Activated T-helper 1 cell treated with anti-CD3 and anti-CD28 coated beads, Interleukin-12 subunit alpha, Interleukin-12 subunit beta, Interleukin-2, Interleukin-4 antibody, amounts not matched to agents 30 ng/mL and 10 ng/mL and 1 ng/mL, durations not matched to agents 14 hours and 24 hours and 36 hours (primary cell): ENCODE measurements at regions of chr13 and their contacts with region 1.

Region 1: DNA sequence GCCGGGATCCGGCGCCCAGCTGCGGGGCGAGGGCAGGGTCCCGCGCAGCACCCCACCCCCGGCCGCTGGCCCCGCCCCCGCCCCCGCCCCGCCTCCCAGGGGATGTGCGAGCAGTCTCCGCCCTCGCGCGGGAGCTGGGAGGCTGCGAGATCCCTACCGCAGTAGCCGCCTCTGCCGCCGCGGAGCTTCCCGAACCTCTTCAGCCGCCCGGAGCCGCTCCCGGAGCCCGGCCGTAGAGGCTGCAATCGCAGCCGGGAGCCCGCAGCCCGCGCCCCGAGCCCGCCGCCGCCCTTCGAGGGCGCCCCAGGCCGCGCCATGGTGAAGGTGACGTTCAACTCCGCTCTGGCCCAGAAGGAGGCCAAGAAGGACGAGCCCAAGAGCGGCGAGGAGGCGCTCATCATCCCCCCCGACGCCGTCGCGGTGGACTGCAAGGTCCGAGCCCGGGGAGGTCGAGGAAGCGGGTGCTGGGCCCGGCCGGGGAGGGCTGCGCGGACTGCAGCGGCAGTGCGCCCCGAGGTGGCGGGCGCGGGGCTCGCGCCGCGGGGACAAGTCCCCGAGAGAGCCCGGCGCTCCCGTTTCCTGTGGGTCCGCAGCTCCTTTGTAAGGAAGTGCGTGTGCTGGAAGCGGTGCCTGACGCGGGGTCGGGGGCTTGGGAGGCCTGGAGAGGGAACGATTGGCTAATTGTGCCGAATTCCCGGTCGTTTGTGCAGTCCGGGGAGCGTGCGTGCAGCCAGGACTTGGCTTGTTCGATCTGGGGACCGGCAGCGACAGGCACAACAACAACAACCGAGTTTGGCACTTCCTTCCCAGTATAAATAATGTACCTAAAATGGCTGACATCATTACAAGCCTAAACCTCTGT is at the start of gene ITM2B:
- DNase-seq: peak; percentile 49
- H3K4me3 Mint-ChIP-seq: peak within 1 kb of the TSS; percentile 92
- H3K27ac Mint-ChIP-seq: peak within 1 kb of the TSS; percentile 80
- H3K4me1 Mint-ChIP-seq: peaks cover 50% of the 10 kb centered on the region
- H3K27me3 Mint-ChIP-seq: peaks cover 26% of the 10 kb centered on the region
- total RNA-seq, gene ITM2B: 56.2 and 61.2 TPM in 2 replicates

Region 2: GRCh38 chr13:48094781-48095502 is 138.3 kb before region 1 on chr13 and contains the start of gene MED4:
- intact Hi-C with region 1: loop called (anchors 1 kb)
- DNase-seq: peak; percentile 98
- H3K4me3 Mint-ChIP-seq: peak within 1 kb of the TSS; percentile 98
- H3K27ac Mint-ChIP-seq: peak within 1 kb of the TSS; percentile 90
- H3K4me1 Mint-ChIP-seq: peaks cover 36% of the 10 kb centered on the region
- H3K27me3 Mint-ChIP-seq: peaks cover 5% of the 10 kb centered on the region
- total RNA-seq, gene MED4: 64.2 and 65.6 TPM in 2 replicates

Region 3: GRCh38 chr13:48186722-48187121 is 46.6 kb before region 1 on chr13:
- intact Hi-C with region 1: loop called (anchors 1 kb)
- DNase-seq: no peak
- H3K4me3 Mint-ChIP-seq: no peak overlapping the region
- H3K27ac Mint-ChIP-seq: no peak overlapping the region
- H3K4me1 Mint-ChIP-seq: peaks cover 21% of the 10 kb centered on the region
- H3K27me3 Mint-ChIP-seq: peaks cover 10% of the 10 kb centered on the region

Region 4: DNA sequence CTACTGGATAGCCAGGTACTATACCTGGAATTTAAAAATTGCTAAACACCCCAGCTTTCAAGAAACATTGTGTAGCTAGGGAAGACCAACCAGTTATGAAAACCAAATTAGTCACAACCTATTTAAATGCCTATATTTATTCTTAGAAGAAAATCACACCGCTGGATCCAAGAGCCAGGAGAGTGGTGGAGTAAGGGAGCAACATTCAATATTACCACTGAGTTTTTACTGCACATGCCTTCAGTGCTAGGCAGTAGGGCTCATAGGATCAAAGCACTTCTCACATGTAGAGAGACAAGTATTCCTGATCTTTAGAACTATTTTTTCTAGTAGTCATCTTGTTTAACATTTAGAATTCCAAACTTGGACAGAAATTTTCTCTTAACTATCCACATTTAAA is 10.9 kb after region 1 on chr13:
- intact Hi-C with region 1: loop called (anchors 1 kb)
- DNase-seq: no peak
- H3K4me3 Mint-ChIP-seq: no peak overlapping the region
- H3K27ac Mint-ChIP-seq: no peak overlapping the region
- H3K4me1 Mint-ChIP-seq: peaks cover 4% of the 10 kb centered on the region
- H3K27me3 Mint-ChIP-seq: no peaks in the 10 kb centered on the region

Region 5: DNA sequence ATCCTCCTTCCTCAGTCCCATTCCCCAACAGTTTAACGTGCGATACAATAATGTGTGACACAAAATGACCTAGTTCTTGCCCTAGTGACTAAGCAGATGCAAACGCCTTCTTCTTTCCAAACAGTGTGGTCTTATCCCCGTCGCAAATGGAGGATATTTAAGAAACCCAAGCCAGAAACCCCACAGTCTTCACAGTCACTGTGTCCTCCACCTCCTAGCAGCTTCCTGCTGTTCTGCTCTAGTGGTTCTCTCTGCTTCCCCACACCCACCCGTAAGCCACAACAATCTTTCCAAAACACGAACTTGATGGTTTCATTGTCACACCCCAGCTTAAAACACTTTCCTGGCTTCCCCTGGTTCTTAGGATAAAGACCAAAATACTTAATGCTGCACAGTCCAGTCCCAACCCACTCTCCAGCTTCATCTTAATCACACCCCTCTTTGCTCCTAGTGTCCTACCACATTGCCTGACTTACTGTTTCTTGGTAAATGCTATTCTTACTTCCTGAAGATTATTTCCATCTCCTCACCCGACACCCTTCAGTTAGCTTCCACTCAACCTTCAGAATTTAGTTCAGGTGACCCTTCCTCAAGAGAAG is 32.0 kb after region 1 on chr13:
- intact Hi-C with region 1: no loop called
- DNase-seq: peak; percentile 13
- H3K4me3 Mint-ChIP-seq: peak overlapping the region; percentile 8
- H3K27ac Mint-ChIP-seq: peak overlapping the region; percentile 40
- H3K4me1 Mint-ChIP-seq: peaks cover 24% of the 10 kb centered on the region
- H3K27me3 Mint-ChIP-seq: no peaks in the 10 kb centered on the region

Region 6: GRCh38 chr13:48532506-48533499 is 299.5 kb after region 1 on chr13 and contains the start of gene RCBTB2:
- intact Hi-C with region 1: loop called (anchors 1 kb)
- DNase-seq: peak; percentile 99
- H3K4me3 Mint-ChIP-seq: peak within 1 kb of the TSS; percentile 91
- H3K27ac Mint-ChIP-seq: peak within 1 kb of the TSS; percentile 98
- H3K4me1 Mint-ChIP-seq: peaks cover 32% of the 10 kb centered on the region
- H3K27me3 Mint-ChIP-seq: peaks cover 7% of the 10 kb centered on the region
- total RNA-seq, gene RCBTB2: 1.7 and 2.0 TPM in 2 replicates

Region 7: DNA sequence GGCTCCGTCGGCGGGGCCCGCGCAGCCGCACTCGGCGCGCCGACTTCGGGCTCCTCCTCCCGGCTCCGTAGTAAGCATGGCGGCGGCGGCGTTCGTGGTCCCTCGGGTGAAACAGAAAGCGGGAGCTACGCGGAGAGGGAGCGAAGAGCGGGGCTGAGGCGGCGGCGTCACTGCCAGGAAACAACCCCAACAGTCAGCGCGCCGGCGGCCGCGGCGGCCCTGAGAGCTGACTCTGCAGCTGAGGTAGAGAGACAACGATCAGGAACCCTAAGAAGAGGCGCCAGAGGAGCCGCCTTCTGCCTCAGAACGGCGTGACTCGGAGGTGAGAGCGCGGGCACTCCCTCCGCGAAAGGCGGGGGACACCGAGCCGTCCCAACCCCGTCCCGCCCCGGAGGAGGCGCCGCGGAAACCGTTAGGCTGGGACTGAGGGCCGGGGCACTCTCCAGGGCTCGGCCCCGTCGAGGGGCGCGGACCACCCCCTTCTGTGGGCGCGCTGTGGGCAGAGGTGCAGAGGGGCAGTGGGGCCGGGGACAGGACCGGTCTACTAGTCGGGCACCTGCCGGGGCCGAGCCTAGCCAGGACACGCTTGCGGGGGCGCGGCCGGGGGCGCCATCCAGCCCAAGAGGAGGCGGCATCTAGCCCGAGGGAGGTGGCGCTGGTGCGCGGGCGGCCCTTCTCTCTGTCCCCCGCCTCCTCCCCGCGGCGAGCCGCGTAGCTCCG is 742.7 kb after region 1 on chr13 and contains the start of gene FNDC3A:
- intact Hi-C with region 1: loop called (anchors 5 kb)
- DNase-seq: peak; percentile 86
- H3K4me3 Mint-ChIP-seq: peak within 1 kb of the TSS; percentile 94
- H3K27ac Mint-ChIP-seq: peak within 1 kb of the TSS; percentile 100
- H3K4me1 Mint-ChIP-seq: peaks cover 43% of the 10 kb centered on the region
- H3K27me3 Mint-ChIP-seq: peaks cover 2% of the 10 kb centered on the region
- total RNA-seq, gene FNDC3A: 26.9 and 27.0 TPM in 2 replicates

Region 8: GRCh38 chr13:48994706-48995105 is 761.4 kb after region 1 on chr13:
- intact Hi-C with region 1: no loop called
- DNase-seq: no peak
- H3K4me3 Mint-ChIP-seq: no peak overlapping the region
- H3K27ac Mint-ChIP-seq: no peak overlapping the region
- H3K4me1 Mint-ChIP-seq: peaks cover 14% of the 10 kb centered on the region
- H3K27me3 Mint-ChIP-seq: no peaks in the 10 kb centered on the region